Sigmoid colon (tissue), 7 donors: ENCODE measurements at regions of chr16 and their contacts with region 1.

Region 1: GRCh38 chr16:81006814-81007696 is at the starts of genes CENPN and CMC2:
- DNase-seq: peak; percentile 100
- H3K4me3 ChIP-seq: peak within 1 kb of the TSS; percentile 80 to 94 (median 88)
- H3K27ac ChIP-seq: peak within 1 kb of the TSS; percentile 97 to 100 (median 98)
- H3K4me1 ChIP-seq: peaks cover 0 to 29% (median 22%) of the 10 kb centered on the region in 4 donors
- H3K27me3 ChIP-seq: no peaks in the 10 kb centered on the region
- CTCF ChIP-seq: no peak
- EP300 ChIP-seq: peak in 2 of 4 donors; percentile 2 to 79
- POLR2A ChIP-seq: peak; percentile 86 to 88
- total RNA-seq, gene CENPN: 3.8 to 5.3 (median 4.2) TPM
- total RNA-seq, gene CMC2: 35.2 to 54.6 (median 45.7) TPM

Region 2: GRCh38 chr16:81077076-81077940 is 70.3 kb after region 1 on chr16 and contains the start of gene C16orf46:
- intact Hi-C with region 1: loop called (anchors 2 kb)
- DNase-seq: peak; percentile 99
- H3K4me3 ChIP-seq: peak within 1 kb of the TSS; percentile 51 to 79 (median 70)
- H3K27ac ChIP-seq: peak within 1 kb of the TSS; percentile 90 to 97 (median 96)
- H3K4me1 ChIP-seq: peaks cover 0 to 5% (median 2%) of the 10 kb centered on the region in 4 donors
- H3K27me3 ChIP-seq: no peaks in the 10 kb centered on the region
- CTCF ChIP-seq: no peak
- EP300 ChIP-seq: peak in 2 of 4 donors; percentile 3 to 4
- POLR2A ChIP-seq: peak; percentile 80 to 86
- total RNA-seq, gene C16orf46: 0.27 to 1.1 TPM in 2 of 4 donors, not detected in the others

Region 3: GRCh38 chr16:81095953-81096717 is 89.1 kb after region 1 on chr16 and contains the start of gene GCSH:
- intact Hi-C with region 1: loop called (anchors 5 kb)
- DNase-seq: peak; percentile 99
- H3K4me3 ChIP-seq: peak within 1 kb of the TSS; percentile 52 to 90 (median 79)
- H3K27ac ChIP-seq: peak within 1 kb of the TSS; percentile 83 to 87 (median 84)
- H3K4me1 ChIP-seq: peaks cover 0 to 12% (median 2%) of the 10 kb centered on the region in 4 donors
- H3K27me3 ChIP-seq: no peaks in the 10 kb centered on the region
- CTCF ChIP-seq: no peak
- EP300 ChIP-seq: no peak
- POLR2A ChIP-seq: no peak
- total RNA-seq, gene GCSH: 18.3 to 27.8 (median 23.6) TPM

Region 4: DNA sequence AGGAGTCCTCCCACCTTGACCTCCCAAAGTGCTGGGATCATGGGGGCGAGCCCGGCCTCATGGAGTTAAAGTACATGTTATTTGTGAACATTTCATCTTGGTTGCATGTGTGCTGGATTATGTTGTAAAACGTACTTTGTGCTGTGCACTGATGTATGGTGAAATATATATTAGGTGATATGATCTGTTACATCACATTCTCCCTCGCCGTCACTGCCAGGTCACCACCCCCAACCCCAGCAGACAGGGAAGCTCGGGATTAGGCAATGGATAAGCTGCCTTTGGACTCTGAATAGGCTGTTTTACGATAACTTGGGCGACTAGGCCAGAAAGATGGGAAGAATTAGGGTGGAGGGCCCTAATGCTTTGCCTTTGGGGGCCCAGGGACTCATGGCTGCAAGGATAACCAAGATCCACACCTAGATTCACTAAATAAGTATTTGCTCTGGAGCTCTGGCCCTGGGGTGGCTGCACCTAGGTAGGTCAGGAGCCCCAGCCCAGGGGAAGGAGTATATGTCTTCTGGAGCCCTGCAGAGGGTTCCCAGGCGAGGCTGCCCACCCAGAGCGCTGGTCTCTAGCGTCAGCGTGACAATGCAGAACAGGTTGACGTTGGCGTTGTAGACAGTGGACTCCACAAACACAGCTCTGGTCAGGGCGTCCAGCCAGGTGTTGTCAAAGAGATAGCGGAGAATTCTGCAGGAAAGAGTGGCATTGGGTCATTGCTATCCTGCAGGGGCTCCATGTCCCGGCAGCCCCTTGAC is 116.2 kb after region 1 on chr16:
- intact Hi-C with region 1: no loop called
- DNase-seq: no peak
- H3K4me3 ChIP-seq: no peak overlapping the region
- H3K27ac ChIP-seq: no peak overlapping the region
- H3K4me1 ChIP-seq: no peaks in the 10 kb centered on the region
- H3K27me3 ChIP-seq: no peaks in the 10 kb centered on the region
- CTCF ChIP-seq: no peak
- EP300 ChIP-seq: no peak
- POLR2A ChIP-seq: no peak